A673 (cell line): ENCODE measurements at regions of chr10 and their contacts with region 1.

Region 1: GRCh38 chr10:110918643-110919363 is at the start of gene BBIP1:
- DNase-seq: peak; percentile 100
- H3K4me3 ChIP-seq: peak within 1 kb of the TSS; percentile 71
- H3K27ac ChIP-seq: peak within 1 kb of the TSS; percentile 94
- H3K4me1 ChIP-seq: peaks cover 44% of the 10 kb centered on the region
- H3K27me3 ChIP-seq: no peaks in the 10 kb centered on the region
- CTCF ChIP-seq: no peak
- total RNA-seq, gene BBIP1: 32.9 and 33.9 TPM in 2 replicates

Region 2: GRCh38 chr10:110871298-110872084 is 47.3 kb before region 1 on chr10 and contains the start of gene PDCD4:
- CTCF ChIA-PET with region 1: no interaction called
- POLR2A ChIA-PET with region 1: interaction called, 4 read pairs
- intact Hi-C with region 1: loop called (anchors 5 kb)
- DNase-seq: peak; percentile 99
- H3K4me3 ChIP-seq: peak within 1 kb of the TSS; percentile 87
- H3K27ac ChIP-seq: peak within 1 kb of the TSS; percentile 89
- H3K4me1 ChIP-seq: peaks cover 3% of the 10 kb centered on the region
- H3K27me3 ChIP-seq: no peaks in the 10 kb centered on the region
- CTCF ChIP-seq: no peak
- total RNA-seq, gene PDCD4: 17.3 and 23.7 TPM in 2 replicates

Region 3: GRCh38 chr10:110959379-110960332 is 40.9 kb after region 1 on chr10:
- CTCF ChIA-PET with region 1: no interaction called
- POLR2A ChIA-PET with region 1: no interaction called
- intact Hi-C with region 1: no loop called
- DNase-seq: no peak
- H3K4me3 ChIP-seq: no peak overlapping the region
- H3K27ac ChIP-seq: no peak overlapping the region
- H3K4me1 ChIP-seq: peaks cover 9% of the 10 kb centered on the region
- H3K27me3 ChIP-seq: no peaks in the 10 kb centered on the region
- CTCF ChIP-seq: no peak